ENCODE measurements at regions of chr19 and their contacts with region 1.

Region 1: GRCh38 chr19:17215125-17215971 is at the start of gene USE1:
- DNase-seq: peak; percentile 91
- H3K4me3 Mint-ChIP-seq: peak within 1 kb of the TSS; percentile 77
- H3K27ac Mint-ChIP-seq: peak within 1 kb of the TSS; percentile 96
- H3K4me1 Mint-ChIP-seq: peaks cover 25% of the 10 kb centered on the region
- H3K27me3 Mint-ChIP-seq: no peaks in the 10 kb centered on the region
- total RNA-seq, gene USE1: 19.9 to 20.4 TPM

Region 2: DNA sequence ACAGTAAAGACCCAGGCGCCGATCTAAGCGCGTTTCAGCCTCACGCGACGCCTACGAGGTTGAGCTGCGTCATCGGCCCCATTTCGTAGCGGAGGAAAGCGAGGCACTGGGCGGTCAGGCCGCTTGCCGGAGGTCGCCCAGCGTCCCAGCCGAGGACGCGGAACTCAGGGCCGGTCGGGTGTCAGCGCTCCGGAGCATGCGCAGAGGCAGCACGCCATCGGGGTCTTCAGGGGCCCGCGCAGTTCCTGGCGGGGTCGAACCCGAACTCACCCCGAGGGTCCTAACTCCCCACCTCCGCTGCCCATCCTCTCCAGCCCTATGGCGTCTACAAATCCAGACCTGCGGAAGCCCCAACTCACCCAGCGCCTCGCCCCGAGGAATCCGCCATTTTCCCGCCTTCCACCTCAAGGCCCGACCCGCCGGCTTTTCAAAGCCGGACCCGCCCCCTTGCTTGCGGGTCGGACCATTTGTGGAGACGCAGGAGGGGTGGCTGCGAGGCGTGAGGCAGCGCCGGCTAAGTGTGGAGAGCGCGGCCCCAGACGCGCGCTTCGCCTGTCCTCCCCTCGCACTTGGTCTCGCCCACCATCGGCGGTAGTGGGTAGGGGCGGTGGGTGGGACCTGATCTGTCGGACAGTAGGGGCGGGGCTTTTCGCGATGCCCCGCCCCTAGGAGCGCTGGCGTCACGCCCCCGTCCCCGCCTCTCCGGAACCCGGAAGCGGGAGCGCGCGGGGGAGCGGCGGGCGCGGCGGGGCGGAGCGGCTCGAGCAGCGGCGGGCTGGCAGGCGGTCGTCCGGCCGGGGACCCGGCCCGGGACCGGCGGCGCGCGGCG is 140.1 kb before region 1 on chr19 and contains the starts of genes HAUS8 and MYO9B:
- CTCF ChIA-PET with region 1: no interaction called
- POLR2A ChIA-PET with region 1: interaction called, 12 read pairs
- DNase-seq: peak; percentile 100
- H3K4me3 Mint-ChIP-seq: peak within 1 kb of the TSS; percentile 99
- H3K27ac Mint-ChIP-seq: peak within 1 kb of the TSS; percentile 94
- H3K4me1 Mint-ChIP-seq: peaks cover 59% of the 10 kb centered on the region
- H3K27me3 Mint-ChIP-seq: no peaks in the 10 kb centered on the region
- total RNA-seq, gene HAUS8: 37.0 to 40.6 TPM
- total RNA-seq, gene MYO9B: 190 to 203 TPM

Region 3: GRCh38 chr19:17125715-17126677 is 89.4 kb before region 1 on chr19:
- CTCF ChIA-PET with region 1: no interaction called
- POLR2A ChIA-PET with region 1: interaction called, 16 read pairs
- DNase-seq: peak; percentile 90
- H3K4me3 Mint-ChIP-seq: peak overlapping the region; percentile 75
- H3K27ac Mint-ChIP-seq: peak overlapping the region; percentile 99
- H3K4me1 Mint-ChIP-seq: peaks cover 67% of the 10 kb centered on the region
- H3K27me3 Mint-ChIP-seq: no peaks in the 10 kb centered on the region

Region 4: GRCh38 chr19:17183858-17184321 is 31.5 kb before region 1 on chr19:
- CTCF ChIA-PET with region 1: interaction called, 6 read pairs
- POLR2A ChIA-PET with region 1: interaction called, 24 read pairs
- DNase-seq: peak; percentile 45
- H3K4me3 Mint-ChIP-seq: peak overlapping the region; percentile 73
- H3K27ac Mint-ChIP-seq: peak overlapping the region; percentile 97
- H3K4me1 Mint-ChIP-seq: peaks cover 34% of the 10 kb centered on the region
- H3K27me3 Mint-ChIP-seq: no peaks in the 10 kb centered on the region

Region 5: DNA sequence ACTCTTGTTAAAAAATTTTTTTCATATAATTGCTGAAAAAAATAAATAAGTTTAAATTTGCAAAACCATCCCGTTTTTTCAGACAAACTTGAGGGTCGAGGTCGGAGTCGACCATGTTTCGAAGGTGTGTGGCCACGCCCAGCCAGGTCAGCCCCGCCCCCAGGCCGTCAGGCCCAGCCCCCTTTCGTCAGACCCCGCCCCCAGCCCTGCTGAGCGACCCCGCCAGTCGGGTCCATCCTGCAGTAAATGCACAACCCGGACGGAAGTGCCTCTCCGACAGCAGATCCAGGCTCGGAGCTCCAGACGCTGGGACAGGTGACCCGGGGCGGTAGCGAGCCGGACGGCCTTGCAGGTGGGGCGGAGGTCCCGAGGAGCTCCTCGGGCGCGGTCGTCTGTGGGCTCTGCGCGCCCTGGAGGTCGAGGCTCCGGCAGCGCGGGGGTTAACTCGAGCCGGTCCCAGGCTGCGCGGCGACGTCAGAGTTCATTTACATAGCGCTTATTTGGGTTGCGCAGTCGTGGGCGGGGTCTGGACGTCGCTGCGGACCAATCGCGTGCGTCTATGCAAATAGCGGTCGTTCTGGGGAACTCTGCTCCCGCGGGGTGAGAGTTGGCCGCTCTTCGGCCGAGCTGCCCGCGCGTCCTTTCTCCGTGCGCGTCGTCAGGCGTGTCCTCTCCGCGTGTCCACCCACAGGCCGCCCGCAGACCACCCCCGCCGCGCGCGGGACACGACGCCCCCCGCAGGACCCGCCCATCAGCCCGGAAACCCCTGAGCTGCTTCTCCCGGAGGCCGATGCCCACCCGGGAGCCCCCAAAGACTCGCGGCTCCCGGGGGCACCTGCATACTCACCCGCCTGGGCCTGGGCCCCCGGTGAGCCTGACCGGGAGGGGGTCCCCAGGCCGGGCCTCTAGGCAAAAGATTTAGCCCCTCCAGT is 10.9 kb after region 1 on chr19 and contains the start of gene OCEL1:
- CTCF ChIA-PET with region 1: interaction called, 6 read pairs
- POLR2A ChIA-PET with region 1: interaction called, 46 read pairs
- DNase-seq: peak; percentile 98
- H3K4me3 Mint-ChIP-seq: peak within 1 kb of the TSS; percentile 91
- H3K27ac Mint-ChIP-seq: peak within 1 kb of the TSS; percentile 96
- H3K4me1 Mint-ChIP-seq: peaks cover 10% of the 10 kb centered on the region
- H3K27me3 Mint-ChIP-seq: no peaks in the 10 kb centered on the region
- total RNA-seq, gene OCEL1: 20.9 to 22.6 TPM

Region 6: DNA sequence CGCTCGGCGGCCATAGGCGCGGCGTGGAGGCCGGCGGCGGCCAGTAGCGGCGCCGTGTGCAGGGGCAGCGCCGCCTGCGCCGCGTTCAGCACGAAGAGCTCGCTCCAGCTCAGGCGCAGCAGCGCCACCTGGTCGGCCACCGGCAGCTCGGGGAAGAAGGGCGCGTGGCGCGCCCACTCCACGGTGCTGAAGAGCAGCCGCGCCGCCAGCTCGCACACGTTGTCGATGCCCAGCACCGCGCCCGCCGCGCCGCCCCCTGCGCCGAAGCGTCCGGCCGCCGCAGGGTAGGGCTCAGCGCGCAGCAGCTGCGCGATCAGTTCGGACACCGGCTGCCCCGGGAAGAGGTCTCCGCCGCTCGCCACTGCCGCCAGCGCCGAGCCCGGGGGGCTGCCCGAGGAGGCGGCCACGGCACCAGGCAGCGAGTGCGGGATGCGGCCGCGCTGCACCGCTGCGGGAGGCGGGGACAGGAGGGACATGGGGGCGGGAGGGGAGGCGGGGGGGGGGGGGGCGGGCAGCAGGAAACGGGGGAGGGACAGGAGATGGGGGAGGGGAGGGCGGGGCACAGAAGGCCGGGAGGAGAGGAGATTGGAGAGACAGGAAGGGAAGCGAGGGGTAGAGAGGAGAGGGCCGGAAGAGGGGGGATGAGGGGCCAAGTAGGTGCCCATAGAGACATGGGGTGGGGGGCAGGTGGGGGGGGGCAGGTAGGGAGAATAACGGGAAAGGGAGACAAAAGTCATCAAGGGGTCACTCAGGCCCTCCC is 20.4 kb after region 1 on chr19:
- CTCF ChIA-PET with region 1: interaction called, 15 read pairs
- POLR2A ChIA-PET with region 1: interaction called, 14 read pairs
- DNase-seq: peak; percentile 79
- H3K4me3 Mint-ChIP-seq: peak overlapping the region; percentile 76
- H3K27ac Mint-ChIP-seq: peak overlapping the region; percentile 68
- H3K4me1 Mint-ChIP-seq: peaks cover 17% of the 10 kb centered on the region
- H3K27me3 Mint-ChIP-seq: no peaks in the 10 kb centered on the region

Measured in activated CD4-positive, alpha-beta memory T cell treated with anti-CD3 and anti-CD28 coated beads, Interleukin-2, amount 10 ng/mL, durations not matched to agents 7 days and 5 days (primary cell).